Keratinocyte (primary cell): ENCODE measurements at regions of chr5 and their contacts with region 1.

Region 1: GRCh38 chr5:156164306-156164705 is 162.7 kb upstream of the SGCD start:
- DNase-seq: no peak
- H3K4me3 ChIP-seq: no peak overlapping the region
- H3K27ac ChIP-seq: no peak overlapping the region
- H3K4me1 ChIP-seq: no peaks in the 10 kb centered on the region
- H3K27me3 ChIP-seq: no peaks in the 10 kb centered on the region
- CTCF ChIP-seq: no peak

Region 2: DNA sequence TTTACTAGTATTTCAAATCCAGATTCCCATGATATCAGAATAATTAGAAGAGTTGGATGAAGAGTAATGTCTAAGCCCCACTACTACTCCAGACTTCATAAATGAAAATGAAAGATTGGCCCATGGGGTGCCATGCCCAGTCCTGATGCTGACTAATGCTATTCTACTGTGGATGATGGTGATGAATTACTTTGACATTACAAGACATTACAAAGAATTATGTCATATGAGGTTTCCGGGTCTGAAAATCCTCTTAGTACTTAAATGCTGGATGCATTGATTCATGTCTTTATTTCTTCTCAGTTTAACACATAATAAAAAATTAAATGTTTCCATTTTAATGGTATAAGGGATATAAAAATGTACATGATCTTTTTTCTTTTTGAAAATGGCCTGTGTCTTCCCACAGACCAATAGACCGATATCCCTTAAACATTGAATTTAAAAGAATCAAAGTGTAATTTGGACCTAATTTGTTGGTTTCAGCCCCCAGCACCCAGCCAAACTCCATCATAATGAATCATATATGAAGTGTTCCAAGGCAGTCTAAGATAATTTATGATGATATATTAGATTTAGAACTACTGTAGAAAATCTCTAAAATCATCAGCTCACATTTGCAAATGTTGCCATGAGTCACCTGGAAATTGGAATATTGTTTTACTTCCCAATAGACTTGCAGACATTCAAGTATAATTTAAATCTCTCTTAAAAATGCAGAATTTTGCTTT is 61.0 kb before region 1 on chr5:
- dilution Hi-C with region 1: loop called (anchors 10 kb)
- DNase-seq: no peak
- H3K4me3 ChIP-seq: no peak overlapping the region
- H3K27ac ChIP-seq: no peak overlapping the region
- H3K4me1 ChIP-seq: no peaks in the 10 kb centered on the region
- H3K27me3 ChIP-seq: no peaks in the 10 kb centered on the region
- CTCF ChIP-seq: no peak

Region 3: GRCh38 chr5:156534906-156535485 is 370.7 kb after region 1 on chr5:
- dilution Hi-C with region 1: no loop called
- DNase-seq: no peak
- H3K4me3 ChIP-seq: no peak overlapping the region
- H3K27ac ChIP-seq: no peak overlapping the region
- H3K4me1 ChIP-seq: no peaks in the 10 kb centered on the region
- H3K27me3 ChIP-seq: no peaks in the 10 kb centered on the region
- CTCF ChIP-seq: no peak